Activated CD8-positive, alpha-beta T cell treated with anti-CD3 and anti-CD28 coated beads, Interleukin-2, amount 10 ng/mL, durations not matched to agents 7 days and 5 days (primary cell): ENCODE measurements at regions of chr12 and their contacts with region 1.

Region 1: DNA sequence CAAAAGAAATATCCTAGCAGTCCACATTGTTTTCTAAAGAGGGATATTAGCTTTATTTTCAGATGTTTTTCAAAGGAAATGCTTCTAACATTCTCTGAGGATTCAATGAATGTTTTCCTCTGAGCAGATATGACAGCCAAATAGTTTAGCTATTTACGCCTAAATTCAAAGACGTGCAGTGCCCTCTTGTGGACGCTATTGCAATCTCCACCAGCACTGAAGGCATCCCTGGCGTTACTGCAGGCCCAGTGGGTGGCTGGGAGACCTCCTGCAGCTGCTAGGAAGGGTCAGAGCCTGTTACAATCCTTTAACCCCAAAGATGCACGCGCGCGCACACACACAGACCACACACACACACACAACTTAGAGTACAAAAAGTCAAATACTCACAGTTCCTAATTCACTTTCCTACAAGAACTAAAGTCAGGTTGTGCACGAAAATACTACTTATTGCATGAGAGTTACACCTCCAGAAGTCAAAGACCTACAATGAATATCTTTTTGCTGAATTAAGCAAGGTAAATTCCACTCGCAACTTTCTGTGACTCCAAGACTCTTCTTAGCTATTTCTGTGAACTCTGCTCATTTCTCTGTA is 589.3 kb upstream of the TMEM132C start:
- DNase-seq: peak; percentile 62
- ATAC-seq: peak; percentile 55
- H3K4me3 Mint-ChIP-seq: no peak overlapping the region
- H3K27ac Mint-ChIP-seq: no peak overlapping the region
- H3K4me1 Mint-ChIP-seq: no peaks in the 10 kb centered on the region
- H3K27me3 Mint-ChIP-seq: no peaks in the 10 kb centered on the region

Region 2: DNA sequence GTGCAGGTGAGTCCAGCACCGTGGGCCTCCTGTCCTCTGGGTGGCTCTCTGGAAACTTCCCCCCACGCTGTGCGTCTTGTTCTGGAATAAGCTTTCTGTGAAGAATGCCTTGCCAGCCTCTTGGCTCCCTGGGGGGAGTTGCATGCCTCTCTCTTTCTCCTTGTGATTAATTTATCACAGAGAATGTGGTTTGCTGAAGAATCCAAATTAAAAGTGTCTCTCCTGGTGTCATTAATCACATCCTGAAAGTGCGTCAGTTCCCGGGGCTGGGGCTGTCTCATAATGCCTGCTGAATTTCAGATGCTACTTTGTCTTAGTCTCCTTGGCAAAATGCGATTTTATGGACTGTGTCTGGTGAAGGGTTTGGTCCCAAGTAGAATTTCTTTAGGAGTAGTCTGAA is 198.4 kb before region 1 on chr12:
- CTCF ChIA-PET with region 1: no interaction called
- POLR2A ChIA-PET with region 1: no interaction called
- DNase-seq: no peak
- ATAC-seq: no peak
- H3K4me3 Mint-ChIP-seq: no peak overlapping the region
- H3K27ac Mint-ChIP-seq: no peak overlapping the region
- H3K4me1 Mint-ChIP-seq: no peaks in the 10 kb centered on the region
- H3K27me3 Mint-ChIP-seq: no peaks in the 10 kb centered on the region

Region 3: DNA sequence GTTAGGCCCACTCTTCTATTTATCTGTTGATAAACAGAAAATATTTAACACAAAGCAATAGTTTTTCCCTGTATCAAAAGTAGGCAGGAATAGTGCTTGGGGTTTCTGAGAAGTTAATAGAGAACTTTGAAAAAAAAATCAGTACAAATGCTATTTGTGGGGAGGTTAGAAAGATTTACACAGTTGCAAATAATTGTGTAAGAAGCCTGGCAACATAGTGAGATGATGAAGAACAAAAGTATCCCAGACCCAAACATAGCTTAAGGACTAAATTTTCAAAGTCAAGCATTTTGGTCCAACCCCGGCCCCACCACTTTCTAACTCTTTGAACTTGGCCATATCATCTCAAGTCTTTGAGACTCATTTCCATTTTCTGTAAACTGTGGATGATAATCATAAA is 98.2 kb before region 1 on chr12:
- CTCF ChIA-PET with region 1: no interaction called
- POLR2A ChIA-PET with region 1: no interaction called
- DNase-seq: no peak
- ATAC-seq: no peak
- H3K4me3 Mint-ChIP-seq: no peak overlapping the region
- H3K27ac Mint-ChIP-seq: no peak overlapping the region
- H3K4me1 Mint-ChIP-seq: no peaks in the 10 kb centered on the region
- H3K27me3 Mint-ChIP-seq: no peaks in the 10 kb centered on the region

Region 4: GRCh38 chr12:127667131-127667685 is 10.4 kb before region 1 on chr12:
- CTCF ChIA-PET with region 1: interaction called, 16 read pairs
- POLR2A ChIA-PET with region 1: no interaction called
- DNase-seq: no peak
- ATAC-seq: no peak
- H3K4me3 Mint-ChIP-seq: no peak overlapping the region
- H3K27ac Mint-ChIP-seq: no peak overlapping the region
- H3K4me1 Mint-ChIP-seq: no peaks in the 10 kb centered on the region
- H3K27me3 Mint-ChIP-seq: no peaks in the 10 kb centered on the region